ENCODE measurements at regions of chr5 and their contacts with region 1.

Region 1: GRCh38 chr5:74919487-74919886 is 53.3 kb upstream of the FAM169A start:
- DNase-seq: no peak
- ATAC-seq: peak; percentile 55 to 81 (median 76)
- H3K4me3 ChIP-seq: no peak overlapping the region
- H3K27ac ChIP-seq: no peak overlapping the region
- H3K4me1 ChIP-seq: no peaks in the 10 kb centered on the region
- H3K27me3 ChIP-seq: no peaks in the 10 kb centered on the region
- CTCF ChIP-seq: peak; percentile 8 to 32 (median 15)

Region 2: DNA sequence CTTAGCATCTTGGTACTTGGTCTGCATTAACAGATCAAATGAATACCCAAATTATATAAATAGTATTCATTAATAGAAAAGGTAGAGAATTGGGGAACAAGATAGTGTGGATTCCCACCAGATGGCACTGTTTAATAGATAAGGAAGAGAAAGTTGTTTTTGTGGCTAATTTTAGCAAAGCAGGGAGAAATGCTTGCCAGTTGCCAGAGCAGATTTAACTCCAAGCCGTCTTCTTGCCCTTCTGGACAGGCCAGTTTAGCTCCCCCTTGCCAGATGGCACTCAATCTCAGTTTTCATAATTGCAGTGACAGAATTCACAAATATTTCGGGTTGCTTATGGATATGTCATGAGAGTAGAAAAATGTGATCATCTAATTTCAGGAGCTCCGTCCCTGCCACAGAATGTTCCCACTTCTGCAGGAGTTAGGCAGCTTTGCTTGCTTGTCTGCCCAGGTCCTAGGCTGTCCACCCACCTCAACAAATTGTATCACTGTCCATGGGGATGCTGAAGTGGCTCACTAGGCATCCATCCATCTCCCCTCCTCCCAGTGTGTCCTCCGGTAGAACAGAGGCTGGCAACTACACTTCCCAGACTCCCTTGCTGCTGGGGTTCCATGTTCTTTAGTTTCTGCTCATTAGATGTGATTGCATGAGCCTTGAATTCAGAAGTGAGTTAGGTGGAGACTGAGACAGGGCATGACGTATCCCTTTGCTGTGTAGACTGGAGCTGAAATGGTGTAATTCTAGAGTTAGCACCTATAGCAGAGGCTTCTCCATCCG is 246.3 kb before region 1 on chr5:
- intact Hi-C with region 1: loop called in 1 of 3 experiments (anchors 10 kb)
- DNase-seq: no peak
- ATAC-seq: peak in 3 of 4 donors; percentile 72 to 87 (median 84)
- H3K4me3 ChIP-seq: peak overlapping the region in 1 of 4 donors; percentile 2
- H3K27ac ChIP-seq: peak overlapping the region in 1 of 4 donors; percentile 9
- H3K4me1 ChIP-seq: no peaks in the 10 kb centered on the region
- H3K27me3 ChIP-seq: no peaks in the 10 kb centered on the region
- CTCF ChIP-seq: no peak